ENCODE measurements at regions of chr10 and their contacts with region 1.

Region 1: DNA sequence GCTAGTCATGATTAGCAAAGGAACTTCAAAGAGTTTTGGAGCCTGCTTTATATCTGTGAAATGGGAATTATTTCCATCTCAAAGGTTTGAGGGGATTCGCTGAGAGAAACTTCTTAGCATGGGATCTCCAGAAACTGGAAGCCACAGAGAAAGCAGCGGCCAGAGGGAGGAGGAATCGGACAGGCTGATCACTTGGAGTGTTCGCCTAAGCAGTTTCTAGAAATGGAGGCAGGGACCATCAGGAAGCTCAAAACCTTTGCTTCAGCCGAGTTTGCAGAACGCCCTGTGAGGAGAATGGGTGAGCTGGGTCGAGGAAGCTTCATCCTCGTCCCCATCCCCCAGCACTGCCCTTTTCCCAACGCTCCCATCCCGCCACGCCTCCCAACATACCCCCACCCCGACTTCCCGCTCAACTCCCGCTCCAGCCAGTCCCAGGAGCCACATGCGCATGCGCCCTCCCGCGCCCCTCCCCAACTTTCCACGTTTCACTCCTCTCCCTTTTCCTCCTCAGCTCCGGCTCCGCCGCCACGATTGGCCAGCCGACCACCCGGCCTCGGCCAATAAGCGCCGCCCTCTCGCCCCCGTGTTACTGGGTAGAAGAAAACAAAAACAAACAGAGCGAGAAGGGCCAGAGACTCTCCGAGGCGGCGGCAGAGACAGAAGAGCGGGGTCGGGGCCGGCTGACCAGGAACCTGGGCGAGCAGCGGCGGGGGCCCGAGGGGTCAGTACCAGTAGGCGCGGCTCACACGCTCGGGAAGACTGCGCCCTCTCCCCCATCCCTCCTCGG is at the start of gene PDCD4:
- DNase-seq: peak; percentile 89 to 97 (median 92)
- ATAC-seq: peak; percentile 86
- H3K4me3 ChIP-seq: peak within 1 kb of the TSS; percentile 64
- H3K27ac ChIP-seq: peak within 1 kb of the TSS; percentile 83
- H3K4me1 ChIP-seq: peaks cover 15 to 26% of the 10 kb centered on the region in 2 experiments
- H3K27me3 ChIP-seq: no peaks in the 10 kb centered on the region
- CTCF ChIP-seq: no peak
- EP300 ChIP-seq: peak; percentile 3; the same call in 1 of the 2 replicates
- POLR2A ChIP-seq: peak; percentile 72
- RAD21 ChIP-seq: no peak
- polyA plus RNA-seq, gene PDCD4: 12.9 to 18.1 TPM

Region 2: DNA sequence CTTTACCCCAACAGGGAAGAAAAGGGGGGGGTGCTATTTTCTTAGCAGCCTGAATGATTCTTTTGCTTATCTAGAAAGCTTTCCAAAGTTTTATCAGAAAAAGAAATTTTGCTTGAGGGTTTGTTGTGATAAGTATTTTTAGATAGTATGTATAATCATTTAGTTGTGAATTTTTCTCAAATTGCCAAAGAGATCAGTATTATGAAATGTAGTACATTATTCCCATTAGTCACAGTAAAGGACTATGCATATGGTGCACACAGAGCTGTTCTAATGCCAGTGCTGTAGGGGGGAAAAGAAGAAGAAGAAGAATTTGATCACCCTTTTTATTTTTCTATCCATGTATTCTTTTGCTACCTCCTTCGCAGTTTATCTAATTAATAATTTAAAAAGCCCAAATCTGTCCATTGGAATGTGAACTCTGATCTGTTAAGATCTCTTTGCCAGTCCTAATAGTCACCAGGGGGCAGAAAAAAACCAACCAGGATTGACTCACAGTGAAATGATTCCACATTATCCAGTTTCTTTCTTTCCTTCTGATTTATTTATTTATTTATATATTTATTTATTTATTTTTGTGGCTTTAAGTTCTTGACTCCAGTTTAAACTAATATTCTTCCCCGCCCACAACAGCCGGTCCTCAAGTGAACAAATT is 222.7 kb before region 1 on chr10:
- CTCF ChIA-PET with region 1: no interaction called
- POLR2A ChIA-PET with region 1: no interaction called
- in situ Hi-C with region 1: no loop called
- intact Hi-C with region 1: loop called (anchors 5 kb)
- DNase-seq: no peak
- ATAC-seq: no peak
- H3K4me3 ChIP-seq: no peak overlapping the region
- H3K27ac ChIP-seq: no peak overlapping the region
- H3K4me1 ChIP-seq: peaks cover 13 to 24% of the 10 kb centered on the region in 2 experiments
- H3K27me3 ChIP-seq: no peaks in the 10 kb centered on the region
- CTCF ChIP-seq: no peak
- EP300 ChIP-seq: no peak
- POLR2A ChIP-seq: no peak
- RAD21 ChIP-seq: no peak

Region 3: GRCh38 chr10:110774069-110775019 is 97.1 kb before region 1 on chr10:
- CTCF ChIA-PET with region 1: no interaction called
- POLR2A ChIA-PET with region 1: interaction called, 4 read pairs
- in situ Hi-C with region 1: no loop called
- intact Hi-C with region 1: loop called (anchors 2 kb)
- DNase-seq: peak; percentile 78 to 87 (median 84)
- ATAC-seq: peak; percentile 89
- H3K4me3 ChIP-seq: no peak overlapping the region
- H3K27ac ChIP-seq: peak overlapping the region; percentile 93
- H3K4me1 ChIP-seq: peaks cover 9 to 53% of the 10 kb centered on the region in 2 experiments; a peak in 4 of 5 replicates
- H3K27me3 ChIP-seq: no peaks in the 10 kb centered on the region
- CTCF ChIP-seq: no peak
- EP300 ChIP-seq: peak; percentile 76; the same call in 1 of the 2 replicates
- POLR2A ChIP-seq: no peak
- RAD21 ChIP-seq: no peak

Region 4: GRCh38 chr10:110820321-110820814 is 51.1 kb before region 1 on chr10:
- CTCF ChIA-PET with region 1: no interaction called
- POLR2A ChIA-PET with region 1: no interaction called
- in situ Hi-C with region 1: no loop called
- intact Hi-C with region 1: no loop called
- DNase-seq: no peak
- ATAC-seq: no peak
- H3K4me3 ChIP-seq: no peak overlapping the region
- H3K27ac ChIP-seq: no peak overlapping the region
- H3K4me1 ChIP-seq: peaks cover 7 to 15% of the 10 kb centered on the region in 2 experiments; a peak in 4 of 5 replicates
- H3K27me3 ChIP-seq: no peaks in the 10 kb centered on the region
- CTCF ChIP-seq: no peak
- EP300 ChIP-seq: no peak
- POLR2A ChIP-seq: no peak
- RAD21 ChIP-seq: no peak

Region 5: DNA sequence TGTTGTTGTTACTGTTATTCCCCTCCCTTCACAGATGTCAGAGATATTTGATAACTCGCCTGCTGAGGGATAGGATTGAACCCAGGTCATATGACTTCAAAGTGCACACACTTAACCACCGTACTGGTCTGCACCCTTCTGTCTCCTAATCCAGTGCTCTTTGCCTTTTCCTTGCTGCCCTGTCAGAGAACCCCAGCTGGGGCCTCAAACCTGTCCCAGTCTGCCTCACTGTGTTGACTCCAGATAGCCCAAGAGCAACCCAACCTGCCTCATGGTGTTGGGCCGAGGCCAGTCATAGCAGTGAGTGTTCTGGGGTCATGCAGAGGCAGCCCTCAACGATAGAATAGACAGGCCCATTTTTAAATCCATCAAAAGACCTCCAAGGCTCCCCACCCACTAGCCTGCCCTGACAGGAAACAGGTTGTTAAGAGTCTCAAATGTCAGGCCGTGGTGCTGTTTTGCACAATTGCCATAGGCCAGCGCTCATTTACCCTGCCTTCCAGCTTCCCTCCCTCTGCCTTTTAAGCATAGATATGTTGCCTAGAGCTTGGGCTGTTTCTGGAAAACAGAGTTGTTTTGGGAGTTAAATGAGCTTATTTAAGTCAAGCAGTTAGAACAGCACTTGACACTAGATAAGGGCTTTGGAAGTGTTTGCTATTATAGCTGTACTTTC is 36.7 kb before region 1 on chr10:
- CTCF ChIA-PET with region 1: no interaction called
- POLR2A ChIA-PET with region 1: interaction called, 3 read pairs
- in situ Hi-C with region 1: no loop called
- intact Hi-C with region 1: loop called (anchors 5 kb)
- DNase-seq: peak in 2 of 4 experiments; percentile 31 to 45
- ATAC-seq: peak; percentile 63
- H3K4me3 ChIP-seq: no peak overlapping the region
- H3K27ac ChIP-seq: no peak overlapping the region
- H3K4me1 ChIP-seq: peaks cover 12 to 29% of the 10 kb centered on the region in 2 experiments
- H3K27me3 ChIP-seq: no peaks in the 10 kb centered on the region
- CTCF ChIP-seq: no peak
- EP300 ChIP-seq: no peak
- POLR2A ChIP-seq: no peak
- RAD21 ChIP-seq: no peak

Region 6: DNA sequence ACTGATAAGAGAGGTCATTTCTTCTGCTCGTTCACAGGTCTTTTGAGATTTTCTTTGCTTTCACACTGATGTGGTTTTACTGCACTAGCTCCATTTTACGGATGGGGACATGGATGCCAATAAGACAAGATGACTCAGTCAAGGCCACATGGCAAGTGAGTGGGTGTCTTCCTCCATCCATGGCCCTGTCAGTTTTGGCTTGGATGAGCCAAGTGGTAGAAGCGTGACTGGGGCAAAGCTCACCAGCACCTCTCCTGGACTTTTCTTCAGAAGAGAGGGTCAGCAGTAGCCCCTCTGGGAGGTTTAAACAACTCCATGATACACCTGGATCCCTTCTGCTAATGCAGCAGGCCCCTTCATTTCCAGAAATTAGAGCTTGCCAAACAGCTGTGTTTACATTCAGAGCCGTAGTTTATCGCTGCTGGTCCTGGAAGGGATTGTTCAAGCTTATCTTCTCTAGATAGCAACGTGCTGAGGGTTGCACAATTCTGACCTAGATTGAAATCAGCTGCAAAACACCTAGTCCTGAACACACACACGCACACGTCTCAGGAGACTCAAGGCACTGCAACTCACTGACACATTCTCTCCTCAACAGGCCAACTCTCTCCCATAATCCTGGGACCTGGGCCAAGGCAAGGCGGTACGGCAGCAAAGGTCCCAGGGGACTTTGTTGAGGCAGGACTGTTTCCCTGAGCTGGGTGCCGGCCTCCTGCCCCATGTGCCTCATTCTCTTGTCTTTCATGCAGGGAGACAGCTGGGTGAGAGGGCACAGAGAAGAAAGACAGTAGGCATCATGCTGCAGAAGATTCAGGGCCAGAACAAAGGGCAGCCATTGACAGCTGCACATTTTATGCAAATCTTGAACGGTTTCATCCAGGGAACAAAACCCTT is 14.0 kb before region 1 on chr10:
- CTCF ChIA-PET with region 1: no interaction called
- POLR2A ChIA-PET with region 1: interaction called, 6 read pairs
- in situ Hi-C with region 1: no loop called
- intact Hi-C with region 1: loop called (anchors 1 kb)
- DNase-seq: peak in 3 of 4 experiments; percentile 57 to 60 (median 57)
- ATAC-seq: peak; percentile 66
- H3K4me3 ChIP-seq: no peak overlapping the region
- H3K27ac ChIP-seq: peak overlapping the region; percentile 60
- H3K4me1 ChIP-seq: peaks cover 21 to 46% of the 10 kb centered on the region in 2 experiments
- H3K27me3 ChIP-seq: no peaks in the 10 kb centered on the region
- CTCF ChIP-seq: no peak
- EP300 ChIP-seq: peak; percentile 85
- POLR2A ChIP-seq: no peak
- RAD21 ChIP-seq: no peak

Region 7: DNA sequence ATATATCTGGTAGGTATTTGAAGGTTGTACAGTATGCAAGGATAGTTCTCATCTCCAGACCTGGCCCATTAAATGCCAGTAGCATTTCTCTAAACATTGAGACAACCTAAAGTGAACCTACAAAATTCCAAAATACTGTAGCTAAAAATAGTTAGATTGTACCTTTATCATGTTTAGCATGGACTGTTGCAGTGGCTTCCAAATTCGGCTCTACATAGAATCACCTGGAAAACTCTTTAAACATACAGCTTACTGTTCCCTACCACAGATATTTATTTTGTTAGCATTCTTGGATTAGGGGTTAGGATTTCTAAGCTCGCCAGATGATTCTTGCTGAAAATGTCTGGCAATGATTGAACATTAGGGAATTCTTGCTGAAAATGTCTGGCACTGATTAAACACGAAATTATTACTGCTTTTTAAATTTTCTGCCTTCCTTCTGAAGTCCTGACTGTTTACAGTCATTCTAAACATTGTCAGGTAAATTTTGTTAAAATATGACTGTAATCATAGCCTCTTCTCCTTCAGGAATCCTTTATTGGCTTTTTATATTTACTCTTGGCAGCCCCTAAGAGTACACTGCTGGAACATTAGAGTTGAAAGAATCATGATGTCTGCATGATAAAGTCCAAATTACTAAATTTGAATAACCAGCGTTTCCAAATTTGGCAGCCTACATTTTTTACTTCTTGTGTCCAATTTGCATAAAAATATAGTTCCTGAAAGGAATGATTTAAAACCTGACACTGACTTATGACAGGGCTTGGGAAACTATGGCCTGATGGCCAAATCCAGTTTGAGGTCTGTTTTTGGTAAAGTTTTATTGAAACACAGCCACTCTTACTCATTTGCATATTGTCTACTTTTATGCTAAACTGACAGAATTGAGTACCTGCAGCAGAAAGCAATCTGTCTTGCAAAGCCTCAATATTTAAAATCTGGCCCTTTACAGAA is 88.2 kb after region 1 on chr10:
- CTCF ChIA-PET with region 1: no interaction called
- POLR2A ChIA-PET with region 1: no interaction called
- in situ Hi-C with region 1: no loop called
- intact Hi-C with region 1: no loop called
- DNase-seq: no peak
- ATAC-seq: no peak
- H3K4me3 ChIP-seq: no peak overlapping the region
- H3K27ac ChIP-seq: no peak overlapping the region
- H3K4me1 ChIP-seq: no peaks in the 10 kb centered on the region
- H3K27me3 ChIP-seq: no peaks in the 10 kb centered on the region
- CTCF ChIP-seq: no peak
- EP300 ChIP-seq: no peak
- POLR2A ChIP-seq: no peak
- RAD21 ChIP-seq: no peak

Region 8: GRCh38 chr10:111360260-111360925 is 488.9 kb after region 1 on chr10:
- CTCF ChIA-PET with region 1: no interaction called
- POLR2A ChIA-PET with region 1: no interaction called
- in situ Hi-C with region 1: no loop called
- intact Hi-C with region 1: no loop called
- DNase-seq: peak in 1 of 4 experiments; percentile 3
- ATAC-seq: no peak
- H3K4me3 ChIP-seq: no peak overlapping the region
- H3K27ac ChIP-seq: no peak overlapping the region
- H3K4me1 ChIP-seq: no peaks in the 10 kb centered on the region
- H3K27me3 ChIP-seq: no peaks in the 10 kb centered on the region
- CTCF ChIP-seq: peak; percentile 11 to 33 (median 29); a peak in 4 of 6 replicates
- EP300 ChIP-seq: no peak
- POLR2A ChIP-seq: no peak
- RAD21 ChIP-seq: peak; percentile 24 to 38

Measured in K562 (cell line).